ENCODE measurements at regions of chr16 and their contacts with region 1.

Region 1: DNA sequence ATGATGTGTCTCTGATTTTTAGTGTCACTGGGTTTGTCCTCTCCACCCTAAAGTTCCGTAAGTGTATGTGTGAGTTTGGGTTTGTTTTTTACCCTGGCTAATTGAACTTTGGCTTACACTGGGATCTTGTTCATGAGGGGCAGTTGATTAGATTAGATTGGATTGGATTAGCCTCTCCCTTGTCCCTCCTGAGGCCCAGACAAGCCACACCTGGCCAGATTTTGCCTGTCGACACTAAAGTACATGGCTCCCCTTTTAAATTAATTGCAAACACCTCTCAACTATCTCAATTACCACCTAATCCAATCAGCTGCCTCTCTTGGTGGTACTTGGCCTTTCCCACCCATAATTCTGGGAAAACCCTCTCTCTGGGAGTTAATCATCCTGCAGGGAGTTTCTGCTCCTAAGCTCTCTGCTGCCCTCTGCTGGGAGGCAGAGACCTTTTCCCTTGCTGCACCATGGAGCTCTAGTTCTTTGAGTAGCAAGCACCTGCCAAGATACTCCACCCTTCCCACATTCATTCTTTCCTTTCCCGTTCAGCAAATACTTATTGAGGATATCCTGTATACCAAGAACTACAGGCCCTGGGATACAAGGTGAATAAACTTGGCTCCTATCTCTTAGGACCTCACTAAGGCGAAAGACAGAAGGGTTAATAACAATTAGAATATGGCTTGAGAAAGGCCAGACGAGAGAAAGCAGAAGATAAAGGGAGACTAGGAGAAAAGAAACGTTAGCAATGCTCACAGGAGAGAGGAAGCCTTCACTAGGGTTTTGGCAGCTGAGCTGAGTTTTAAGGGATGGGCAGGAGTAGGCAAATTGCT is 60.0 kb upstream of the MPHOSPH6 start:
- DNase-seq: peak; percentile 28 to 75 (median 69)
- ATAC-seq: peak; percentile 96
- H3K4me3 ChIP-seq: no peak overlapping the region
- H3K27ac ChIP-seq: no peak overlapping the region
- H3K4me1 ChIP-seq: peaks cover 0 to 2% of the 10 kb centered on the region in 2 donors
- H3K27me3 ChIP-seq: no peaks in the 10 kb centered on the region
- CTCF ChIP-seq: peak; percentile 86 to 93

Region 2: GRCh38 chr16:81940781-81941560 is 289.0 kb before region 1 on chr16:
- intact Hi-C with region 1: loop called in 1 of 2 experiments (anchors 5 kb)
- DNase-seq: peak in 1 of 4 donors; percentile 47
- ATAC-seq: peak; percentile 77
- H3K4me3 ChIP-seq: no peak overlapping the region
- H3K27ac ChIP-seq: no peak overlapping the region
- H3K4me1 ChIP-seq: peaks cover 0 to 5% of the 10 kb centered on the region in 2 donors
- H3K27me3 ChIP-seq: no peaks in the 10 kb centered on the region
- CTCF ChIP-seq: peak; percentile 13 to 32

Region 3: DNA sequence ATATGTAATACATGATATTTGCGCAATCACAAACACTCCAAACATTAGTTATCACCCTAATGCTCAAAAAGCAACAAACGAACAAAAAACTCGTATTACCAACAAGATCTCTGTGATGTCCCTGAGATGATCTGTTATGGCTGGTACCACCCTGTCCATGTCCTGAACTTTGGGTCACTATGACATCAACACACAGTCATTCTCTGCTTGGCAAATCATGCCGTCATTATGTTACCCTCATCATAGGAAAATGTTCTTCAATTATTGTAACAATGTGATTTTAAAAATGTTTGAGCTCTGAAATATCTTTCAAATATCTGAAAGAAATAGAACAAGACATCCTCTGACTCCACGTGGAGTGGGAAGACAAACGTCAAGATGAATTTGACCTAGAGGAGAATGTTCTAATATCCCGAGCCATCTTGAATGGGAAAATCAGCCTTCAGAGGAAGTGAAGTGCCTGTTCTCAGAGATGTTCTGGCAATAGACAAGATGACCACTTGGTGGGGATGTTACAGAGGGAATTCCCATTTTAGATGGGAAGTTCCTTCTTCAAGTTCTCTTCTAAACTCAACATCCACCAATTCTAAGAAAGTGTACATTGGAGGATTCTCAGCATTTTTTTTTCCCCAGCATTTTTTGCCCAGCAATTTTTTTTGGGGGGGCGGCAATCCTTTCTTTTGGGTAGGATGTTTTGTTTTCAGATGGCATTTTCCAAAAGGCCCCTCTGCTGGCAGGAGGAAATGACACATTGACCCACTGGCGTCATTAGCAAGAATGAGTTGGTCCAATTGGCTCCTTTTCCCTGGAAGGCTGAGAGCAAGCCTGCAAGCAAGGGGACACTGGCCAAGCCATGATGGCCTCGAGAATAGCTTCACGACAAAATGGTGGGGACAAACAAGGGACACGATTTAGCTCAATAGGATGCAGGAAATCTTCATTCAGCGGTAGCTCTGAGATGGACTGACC is 198.6 kb before region 1 on chr16:
- intact Hi-C with region 1: loop called in 1 of 2 experiments (anchors 5 kb)
- DNase-seq: peak in 1 of 4 donors; percentile 65
- ATAC-seq: peak; percentile 70
- H3K4me3 ChIP-seq: no peak overlapping the region
- H3K27ac ChIP-seq: no peak overlapping the region
- H3K4me1 ChIP-seq: no peaks in the 10 kb centered on the region
- H3K27me3 ChIP-seq: no peaks in the 10 kb centered on the region
- CTCF ChIP-seq: peak; percentile 25 to 41